ENCODE measurements at regions of chr20 and their contacts with region 1.

Region 1: GRCh38 chr20:53578492-53579222 is 15.0 kb downstream of the ZNF217 start:
- DNase-seq: no peak
- H3K4me3 ChIP-seq: peak overlapping the region in 3 of 4 donors; percentile 2 to 10 (median 7)
- H3K27ac ChIP-seq: peak overlapping the region; percentile 67 to 79 (median 72)
- H3K4me1 ChIP-seq: peaks cover 0 to 37% (median 28%) of the 10 kb centered on the region in 4 donors
- H3K27me3 ChIP-seq: no peaks in the 10 kb centered on the region
- CTCF ChIP-seq: peak; percentile 86 to 99 (median 97)
- EP300 ChIP-seq: no peak
- POLR2A ChIP-seq: no peak

Region 2: DNA sequence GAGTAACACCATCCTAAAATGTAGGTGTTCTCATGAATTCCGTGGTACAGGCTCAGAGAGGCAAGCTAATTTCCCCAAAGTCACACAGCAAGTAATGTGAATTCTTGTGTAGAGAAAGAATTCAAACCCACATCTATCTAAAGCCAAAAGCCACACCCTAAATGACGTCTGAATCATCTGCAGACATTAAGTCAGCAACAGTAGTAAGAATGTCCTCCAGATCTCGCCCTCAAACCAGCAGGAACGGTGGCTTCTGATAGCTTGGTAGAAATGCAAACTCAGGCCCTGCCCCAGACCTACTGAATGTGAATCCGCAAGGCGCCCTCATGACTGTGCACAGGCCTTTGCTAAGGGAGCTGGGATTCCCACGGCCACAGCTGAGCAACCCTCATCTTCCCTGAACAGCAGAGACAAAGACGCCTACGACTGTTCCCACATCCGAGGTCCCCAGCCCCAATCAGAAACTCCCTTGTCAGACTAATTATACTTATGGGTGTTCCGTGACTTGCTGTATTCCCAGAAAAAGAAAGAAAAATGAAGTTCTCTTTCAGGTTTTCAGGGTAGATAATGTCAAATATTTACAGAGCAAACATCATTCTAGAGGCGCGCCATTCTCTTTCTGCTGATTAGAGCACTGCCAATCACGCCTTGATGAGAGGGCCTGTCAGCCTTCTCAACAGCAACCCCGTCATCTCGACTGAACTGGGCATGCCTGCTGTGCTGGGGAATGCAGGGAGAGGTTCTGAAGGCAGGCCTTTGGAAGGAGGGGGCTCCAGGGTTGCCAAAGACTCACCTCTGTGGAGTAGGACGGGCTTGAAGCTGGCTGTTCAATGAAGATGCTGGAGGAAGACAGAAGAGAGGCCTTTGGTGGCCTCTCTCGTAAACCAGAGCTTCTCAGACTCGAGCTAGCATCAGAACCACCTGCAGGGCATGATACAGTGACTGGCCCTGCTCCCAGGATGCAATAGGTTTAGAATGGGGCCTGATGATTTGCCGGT is 65.1 kb before region 1 on chr20:
- intact Hi-C with region 1: no loop called
- DNase-seq: no peak
- H3K4me3 ChIP-seq: no peak overlapping the region
- H3K27ac ChIP-seq: no peak overlapping the region
- H3K4me1 ChIP-seq: no peaks in the 10 kb centered on the region
- H3K27me3 ChIP-seq: no peaks in the 10 kb centered on the region
- CTCF ChIP-seq: no peak
- EP300 ChIP-seq: no peak
- POLR2A ChIP-seq: no peak

Region 3: DNA sequence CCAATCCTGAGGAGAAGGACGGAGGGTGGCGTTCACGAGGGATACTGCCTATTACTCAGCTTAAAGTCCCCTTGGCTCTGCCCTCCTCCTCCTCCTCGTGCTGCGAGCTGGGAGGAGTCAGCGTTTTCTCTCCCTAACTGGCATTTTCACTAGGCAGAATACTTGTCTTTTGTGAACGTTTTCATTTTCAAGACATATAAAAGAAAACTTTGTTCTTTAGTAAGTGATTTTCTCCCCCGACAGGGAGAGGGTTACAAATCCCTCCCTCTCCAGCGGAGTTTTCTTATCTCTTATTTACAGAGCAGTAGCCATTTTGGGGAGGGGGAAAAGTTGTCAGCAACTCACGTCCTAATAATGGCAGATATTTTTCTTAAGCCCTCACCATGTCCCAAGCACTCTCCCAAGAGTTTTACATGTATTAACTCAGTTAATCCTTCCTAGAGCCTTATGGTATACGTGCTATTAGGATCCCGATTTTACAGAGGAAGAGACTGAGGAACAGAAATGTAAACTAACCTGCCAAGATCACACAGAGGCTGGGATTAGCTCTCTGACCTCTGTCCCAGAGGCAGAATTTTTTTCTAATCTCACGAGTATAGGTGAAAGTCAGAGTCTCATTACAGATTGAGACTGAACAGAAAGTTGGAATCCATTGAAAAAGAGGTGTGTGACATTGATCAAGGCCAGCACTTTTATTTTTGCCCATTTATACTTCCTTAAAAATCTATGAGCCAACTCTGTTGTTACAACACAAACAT is 45.0 kb after region 1 on chr20:
- intact Hi-C with region 1: loop called (anchors 5 kb)
- DNase-seq: peak; percentile 87
- H3K4me3 ChIP-seq: peak overlapping the region; percentile 12 to 49 (median 39)
- H3K27ac ChIP-seq: peak overlapping the region; percentile 78 to 84 (median 81)
- H3K4me1 ChIP-seq: peaks cover 0 to 31% (median 26%) of the 10 kb centered on the region in 4 donors
- H3K27me3 ChIP-seq: no peaks in the 10 kb centered on the region
- CTCF ChIP-seq: no peak
- EP300 ChIP-seq: no peak
- POLR2A ChIP-seq: peak in 1 of 2 donors; percentile 14

Region 4: DNA sequence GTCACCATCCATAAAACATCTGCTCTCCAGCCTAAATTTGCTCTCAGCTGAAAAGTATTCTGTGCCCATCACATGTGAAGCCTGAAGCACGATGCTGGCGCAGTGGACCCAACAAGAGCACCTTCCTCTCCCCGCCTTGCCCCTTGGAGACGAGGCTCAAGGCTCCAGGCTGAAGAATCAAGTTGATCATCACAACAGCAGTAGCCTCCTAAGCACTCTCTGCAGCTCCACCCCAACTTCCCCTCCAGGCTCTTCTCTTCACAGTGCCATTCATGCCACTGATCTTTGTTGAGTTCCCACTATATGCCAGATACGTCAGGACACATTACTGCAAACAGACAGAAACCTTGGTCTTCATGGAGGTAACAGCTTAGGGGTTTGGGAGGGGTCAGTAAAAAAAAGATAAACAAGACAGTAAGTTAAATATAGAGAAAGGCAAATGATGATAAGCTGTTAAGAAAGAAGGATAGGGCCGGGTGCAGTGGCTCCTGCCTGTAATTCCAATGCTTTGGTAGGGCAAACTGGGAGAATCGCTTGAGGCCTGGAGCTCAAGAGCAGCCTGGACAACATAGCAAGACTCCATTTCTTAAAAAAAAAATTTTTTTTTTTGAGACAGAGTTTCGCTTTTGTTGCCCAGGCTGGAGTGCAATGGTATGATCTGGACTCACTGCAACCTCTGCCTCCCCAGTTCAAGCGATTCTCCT is 56.7 kb after region 1 on chr20:
- intact Hi-C with region 1: no loop called
- DNase-seq: no peak
- H3K4me3 ChIP-seq: no peak overlapping the region
- H3K27ac ChIP-seq: no peak overlapping the region
- H3K4me1 ChIP-seq: no peaks in the 10 kb centered on the region
- H3K27me3 ChIP-seq: no peaks in the 10 kb centered on the region
- CTCF ChIP-seq: peak in 1 of 4 experiments; percentile 2
- EP300 ChIP-seq: no peak
- POLR2A ChIP-seq: no peak

Region 5: DNA sequence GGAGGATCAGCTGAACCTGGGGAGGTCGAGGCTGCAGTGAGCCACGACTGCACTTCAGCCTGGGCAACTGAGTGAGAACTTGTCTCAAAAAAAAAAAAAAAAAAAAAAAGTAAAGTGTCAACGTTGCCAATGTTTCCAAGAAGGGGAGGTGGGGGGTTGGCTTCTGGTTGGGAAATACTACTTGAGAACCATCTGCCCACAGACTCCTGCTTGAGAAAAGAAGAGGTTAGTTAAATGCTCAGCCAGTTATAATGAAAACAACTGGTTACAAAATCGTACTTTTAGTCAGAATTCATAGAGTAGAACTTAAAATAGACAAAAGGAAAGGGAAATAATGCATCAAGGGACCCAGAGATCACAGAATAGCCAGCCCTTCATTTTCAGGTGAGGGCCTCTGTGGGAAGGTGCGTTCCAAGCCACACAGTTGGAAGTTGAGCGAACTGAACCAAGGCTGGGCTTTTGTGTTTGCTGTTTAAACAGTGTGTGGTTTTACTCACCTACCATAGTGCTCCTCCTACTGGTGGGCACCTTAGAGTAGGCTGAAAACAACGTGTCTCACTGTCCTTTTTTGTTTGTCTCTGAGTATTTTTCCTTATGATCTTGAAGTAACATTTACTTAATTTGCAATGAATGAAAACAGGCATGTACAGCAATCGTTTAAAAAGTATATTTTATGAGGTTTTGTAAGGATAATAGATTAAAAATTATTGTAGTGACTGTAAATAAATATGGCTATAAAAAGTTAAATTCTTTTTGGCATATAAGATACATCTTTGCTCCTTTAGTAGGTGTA is 291.0 kb after region 1 on chr20:
- intact Hi-C with region 1: loop called (anchors 1 kb)
- DNase-seq: peak; percentile 71
- H3K4me3 ChIP-seq: no peak overlapping the region
- H3K27ac ChIP-seq: peak overlapping the region in 3 of 4 donors; percentile 16 to 57 (median 42)
- H3K4me1 ChIP-seq: peaks cover 0 to 42% (median 35%) of the 10 kb centered on the region in 4 donors
- H3K27me3 ChIP-seq: peaks cover 0 to 3% (median 0%) of the 10 kb centered on the region in 3 donors
- CTCF ChIP-seq: peak; percentile 56 to 85 (median 72)
- EP300 ChIP-seq: no peak
- POLR2A ChIP-seq: no peak

Region 6: DNA sequence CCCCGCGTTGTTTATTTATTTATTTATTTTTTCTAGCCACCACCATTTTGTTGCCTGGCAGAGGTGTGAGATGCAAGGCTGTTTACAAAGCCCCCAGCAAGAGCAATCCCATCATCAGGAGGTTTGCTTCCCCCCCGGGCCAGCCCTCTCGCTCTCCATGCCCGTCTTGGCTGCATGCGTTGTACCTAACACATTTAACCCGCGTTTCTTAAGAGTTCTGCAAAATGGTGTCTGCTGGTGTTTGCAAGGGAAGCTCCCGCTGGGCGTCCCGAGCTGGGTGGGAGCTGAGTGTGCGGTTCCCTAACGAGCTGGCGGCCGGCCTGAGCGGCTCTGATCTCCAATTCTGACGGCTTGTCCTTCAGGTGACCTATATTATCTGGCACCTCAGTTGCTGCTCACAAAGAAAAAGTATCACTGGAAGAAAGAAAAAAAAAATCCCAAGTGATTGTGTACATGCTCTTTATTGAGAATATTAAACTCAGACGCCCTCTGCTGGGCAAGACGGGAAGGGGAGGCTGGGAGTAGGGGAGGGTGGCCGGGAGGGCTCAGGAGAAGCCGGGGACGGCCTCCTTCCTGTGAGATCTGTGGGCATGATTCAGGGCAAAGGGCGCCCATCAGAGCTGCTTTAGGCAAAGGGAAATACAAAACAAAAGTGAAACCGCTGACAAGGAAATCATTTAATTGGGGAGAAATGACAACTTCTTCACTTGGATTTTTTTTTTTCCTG is 337.0 kb after region 1 on chr20:
- intact Hi-C with region 1: loop called (anchors 1 kb)
- DNase-seq: peak; percentile 96
- H3K4me3 ChIP-seq: peak overlapping the region; percentile 36 to 58 (median 56)
- H3K27ac ChIP-seq: peak overlapping the region; percentile 79 to 87 (median 80)
- H3K4me1 ChIP-seq: peaks cover 0 to 38% (median 33%) of the 10 kb centered on the region in 4 donors
- H3K27me3 ChIP-seq: no peaks in the 10 kb centered on the region
- CTCF ChIP-seq: peak; percentile 88 to 94 (median 90)
- EP300 ChIP-seq: no peak
- POLR2A ChIP-seq: no peak

Region 7: DNA sequence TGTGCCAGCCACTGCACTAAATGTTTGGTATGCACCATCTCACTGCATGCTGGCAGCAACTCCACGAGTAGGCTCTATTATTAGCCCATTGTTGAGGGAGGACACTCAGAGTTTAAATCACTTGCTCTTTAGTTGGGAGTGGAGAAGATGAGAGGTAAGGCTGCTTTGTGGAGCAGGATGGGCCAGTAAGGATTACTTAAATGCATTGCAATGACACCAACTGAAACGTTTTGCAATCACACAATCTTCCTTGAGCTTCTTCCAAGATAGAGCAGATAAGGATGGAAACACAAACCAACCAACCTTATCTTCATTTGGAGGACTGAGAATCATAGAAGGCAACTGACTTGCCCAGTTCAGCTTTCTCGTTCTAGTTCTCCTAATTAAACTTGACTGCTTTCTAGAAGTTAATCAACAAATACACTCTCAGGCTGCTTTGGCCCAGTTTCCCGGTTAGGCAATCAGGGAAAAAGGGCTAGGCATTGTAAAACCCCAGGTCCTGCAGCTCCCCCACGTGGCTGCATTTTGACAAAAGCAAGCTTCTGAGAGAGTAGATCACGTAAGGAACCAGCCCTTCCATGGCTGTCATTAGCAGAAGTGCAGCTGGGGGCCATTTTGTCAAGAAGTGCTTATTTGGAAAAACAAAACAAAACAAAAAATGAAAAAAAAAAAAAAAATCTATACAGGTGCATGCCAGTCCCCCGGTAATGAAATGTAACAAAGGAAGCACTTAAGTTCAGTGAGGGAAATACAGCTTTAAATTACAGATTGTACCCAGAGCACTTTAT is 361.1 kb after region 1 on chr20:
- intact Hi-C with region 1: loop called (anchors 1 kb)
- DNase-seq: peak; percentile 95
- H3K4me3 ChIP-seq: no peak overlapping the region
- H3K27ac ChIP-seq: peak overlapping the region; percentile 53 to 71 (median 62)
- H3K4me1 ChIP-seq: peaks cover 0 to 38% (median 24%) of the 10 kb centered on the region in 4 donors
- H3K27me3 ChIP-seq: no peaks in the 10 kb centered on the region
- CTCF ChIP-seq: peak; percentile 59 to 68 (median 62)
- EP300 ChIP-seq: no peak
- POLR2A ChIP-seq: no peak

Region 8: GRCh38 chr20:54207743-54208547 is 629.3 kb after region 1 on chr20 and contains the start of gene PFDN4:
- intact Hi-C with region 1: loop called (anchors 5 kb)
- DNase-seq: peak; percentile 85
- H3K4me3 ChIP-seq: peak within 1 kb of the TSS; percentile 82 to 98 (median 84)
- H3K27ac ChIP-seq: peak within 1 kb of the TSS; percentile 88 to 97 (median 90)
- H3K4me1 ChIP-seq: peaks cover 0 to 41% (median 30%) of the 10 kb centered on the region in 4 donors
- H3K27me3 ChIP-seq: no peaks in the 10 kb centered on the region
- CTCF ChIP-seq: peak in 3 of 4 experiments; percentile 68 to 79 (median 76)
- EP300 ChIP-seq: peak in 1 of 4 donors; percentile 7
- POLR2A ChIP-seq: no peak
- total RNA-seq, gene PFDN4: 75.9 to 284 (median 180) TPM

Measured in sigmoid colon (tissue), 7 donors.